ENCODE measurements at regions of chr6 and their contacts with region 1.

Region 1: GRCh38 chr6:24933868-24934401 is 1.8 kb downstream of the RIPOR2 start:
- DNase-seq: peak; percentile 60
- H3K4me3 Mint-ChIP-seq: peak overlapping the region; percentile 87
- H3K27ac Mint-ChIP-seq: peak overlapping the region; percentile 97
- H3K4me1 Mint-ChIP-seq: peaks cover 87% of the 10 kb centered on the region
- H3K27me3 Mint-ChIP-seq: no peaks in the 10 kb centered on the region

Region 2: DNA sequence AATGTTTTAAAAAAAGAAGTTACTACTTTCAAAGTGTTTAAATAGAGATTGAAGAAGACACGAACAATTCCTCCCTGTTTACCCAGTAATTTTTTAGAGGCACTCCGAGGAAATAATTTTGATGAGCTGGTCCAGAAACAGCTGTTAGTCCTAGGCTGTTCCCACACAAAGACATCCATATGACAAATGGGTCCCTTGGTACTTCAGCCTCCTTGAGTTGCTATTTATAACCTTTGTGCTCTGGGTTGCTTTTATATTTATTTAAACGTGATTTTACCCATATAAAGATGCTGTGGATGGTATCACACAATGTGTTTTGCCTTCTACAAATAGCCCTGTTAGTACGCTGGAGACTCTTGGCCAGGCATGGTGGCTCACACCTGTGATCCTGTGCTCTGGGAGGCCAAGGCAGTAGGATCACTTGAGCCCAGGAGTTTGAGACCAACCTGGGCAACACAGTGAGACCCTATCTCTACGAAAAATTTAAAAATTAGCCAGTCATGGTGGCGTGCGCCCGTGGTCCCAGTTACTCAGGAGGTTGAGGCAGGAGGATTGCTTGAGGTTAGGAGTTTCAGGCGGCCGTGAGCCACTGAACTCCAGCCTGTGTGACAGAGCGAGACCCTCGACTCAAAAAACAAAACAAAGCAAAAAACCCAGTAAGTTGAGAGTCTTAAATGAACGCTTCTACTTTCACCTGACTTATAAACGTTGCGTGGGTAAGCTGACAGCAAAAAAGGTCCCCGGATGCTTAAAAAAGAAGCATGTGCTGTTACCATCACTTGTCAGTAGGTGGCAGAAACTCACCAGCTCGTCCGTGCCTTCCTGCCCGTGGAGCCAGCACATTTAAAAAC is 78.3 kb before region 1 on chr6:
- CTCF ChIA-PET with region 1: interaction called, 91 read pairs
- POLR2A ChIA-PET with region 1: interaction called, 5 read pairs
- intact Hi-C with region 1: loop called (anchors 1 kb)
- DNase-seq: peak; percentile 81
- H3K4me3 Mint-ChIP-seq: peak overlapping the region; percentile 17
- H3K27ac Mint-ChIP-seq: peak overlapping the region; percentile 89
- H3K4me1 Mint-ChIP-seq: peaks cover 56% of the 10 kb centered on the region
- H3K27me3 Mint-ChIP-seq: no peaks in the 10 kb centered on the region

Region 3: GRCh38 chr6:24899997-24900325 is 34.0 kb before region 1 on chr6:
- CTCF ChIA-PET with region 1: interaction called, 36 read pairs
- POLR2A ChIA-PET with region 1: interaction called, 5 read pairs
- intact Hi-C with region 1: loop called (anchors 1 kb)
- DNase-seq: peak; percentile 70
- H3K4me3 Mint-ChIP-seq: peak overlapping the region; percentile 59
- H3K27ac Mint-ChIP-seq: peak overlapping the region; percentile 90
- H3K4me1 Mint-ChIP-seq: peaks cover 88% of the 10 kb centered on the region
- H3K27me3 Mint-ChIP-seq: no peaks in the 10 kb centered on the region

Region 4: DNA sequence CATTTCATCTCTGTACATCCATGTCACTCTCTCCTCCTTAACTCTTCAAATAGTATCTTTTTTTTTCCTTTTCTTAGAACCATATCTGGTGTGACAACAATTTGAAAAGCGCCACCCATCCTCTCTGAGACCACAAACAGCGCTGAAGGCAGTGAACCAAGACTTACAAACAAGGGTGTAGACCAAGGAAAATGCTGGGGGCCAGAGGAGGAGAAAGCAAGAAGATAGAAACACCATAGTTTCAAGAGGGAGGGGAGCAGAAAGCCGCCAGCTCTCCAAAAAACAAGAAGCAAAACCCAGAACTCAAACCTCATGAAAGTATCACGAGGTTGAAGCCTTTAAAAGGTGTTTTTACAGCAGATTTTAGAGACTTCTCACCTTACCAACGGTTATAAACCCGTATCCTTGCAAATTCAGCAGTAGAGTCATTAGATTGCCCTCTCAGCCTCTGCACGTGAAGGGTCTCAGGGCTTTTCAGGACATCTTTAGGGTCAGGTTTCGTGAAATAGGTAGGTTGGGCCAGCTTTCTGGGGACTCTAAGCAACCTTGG is 15.2 kb after region 1 on chr6:
- CTCF ChIA-PET with region 1: interaction called, 91 read pairs
- POLR2A ChIA-PET with region 1: interaction called, 7 read pairs
- intact Hi-C with region 1: loop called (anchors 1 kb)
- DNase-seq: peak; percentile 53
- H3K4me3 Mint-ChIP-seq: peak overlapping the region; percentile 22
- H3K27ac Mint-ChIP-seq: peak overlapping the region; percentile 73
- H3K4me1 Mint-ChIP-seq: peaks cover 61% of the 10 kb centered on the region
- H3K27me3 Mint-ChIP-seq: no peaks in the 10 kb centered on the region

Region 5: GRCh38 chr6:24991810-24992467 is 58.0 kb after region 1 on chr6:
- CTCF ChIA-PET with region 1: interaction called, 195 read pairs
- POLR2A ChIA-PET with region 1: interaction called, 6 read pairs
- intact Hi-C with region 1: loop called (anchors 1 kb)
- DNase-seq: peak; percentile 81
- H3K4me3 Mint-ChIP-seq: peak overlapping the region; percentile 11
- H3K27ac Mint-ChIP-seq: peak overlapping the region; percentile 76
- H3K4me1 Mint-ChIP-seq: peaks cover 68% of the 10 kb centered on the region
- H3K27me3 Mint-ChIP-seq: no peaks in the 10 kb centered on the region

Region 6: GRCh38 chr6:25070547-25071366 is 136.8 kb after region 1 on chr6:
- CTCF ChIA-PET with region 1: interaction called, 5 read pairs
- POLR2A ChIA-PET with region 1: no interaction called
- intact Hi-C with region 1: loop called (anchors 5 kb)
- DNase-seq: peak; percentile 90
- H3K4me3 Mint-ChIP-seq: peak overlapping the region; percentile 44
- H3K27ac Mint-ChIP-seq: peak overlapping the region; percentile 78
- H3K4me1 Mint-ChIP-seq: peaks cover 10% of the 10 kb centered on the region
- H3K27me3 Mint-ChIP-seq: no peaks in the 10 kb centered on the region

Region 7: GRCh38 chr6:25107218-25107617 is 173.3 kb after region 1 on chr6:
- CTCF ChIA-PET with region 1: no interaction called
- POLR2A ChIA-PET with region 1: no interaction called
- intact Hi-C with region 1: no loop called
- DNase-seq: no peak
- H3K4me3 Mint-ChIP-seq: no peak overlapping the region
- H3K27ac Mint-ChIP-seq: no peak overlapping the region
- H3K4me1 Mint-ChIP-seq: peaks cover 3% of the 10 kb centered on the region
- H3K27me3 Mint-ChIP-seq: no peaks in the 10 kb centered on the region

Region 8: DNA sequence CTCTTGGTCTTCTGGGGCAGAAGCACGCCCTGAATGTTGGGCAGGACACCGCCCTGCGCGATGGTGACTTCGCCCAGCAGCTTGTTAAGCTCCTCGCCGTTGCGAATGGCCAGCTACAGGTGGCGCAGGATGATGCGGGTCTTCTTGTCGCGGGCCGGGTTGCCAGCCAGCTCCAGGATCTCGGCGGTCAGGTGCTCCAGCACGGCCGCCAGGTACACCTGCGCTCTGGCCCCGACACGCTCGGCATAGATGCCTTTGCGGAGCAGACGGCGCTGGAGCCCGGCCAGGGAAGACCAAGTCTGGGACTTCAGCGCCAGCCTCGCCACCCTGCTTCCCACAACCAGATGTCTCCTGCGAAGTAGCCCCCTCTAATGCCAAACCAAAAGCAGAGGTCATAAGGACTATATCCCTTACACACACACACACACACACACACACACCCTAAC is 948.1 kb after region 1 on chr6:
- CTCF ChIA-PET with region 1: no interaction called
- POLR2A ChIA-PET with region 1: no interaction called
- intact Hi-C with region 1: no loop called
- DNase-seq: peak; percentile 53
- H3K4me3 Mint-ChIP-seq: peak overlapping the region; percentile 75
- H3K27ac Mint-ChIP-seq: no peak overlapping the region
- H3K4me1 Mint-ChIP-seq: peaks cover 2% of the 10 kb centered on the region
- H3K27me3 Mint-ChIP-seq: peaks cover 6% of the 10 kb centered on the region